H1 (cell line): ENCODE measurements at regions of chr1 and their contacts with region 1.

Region 1: DNA sequence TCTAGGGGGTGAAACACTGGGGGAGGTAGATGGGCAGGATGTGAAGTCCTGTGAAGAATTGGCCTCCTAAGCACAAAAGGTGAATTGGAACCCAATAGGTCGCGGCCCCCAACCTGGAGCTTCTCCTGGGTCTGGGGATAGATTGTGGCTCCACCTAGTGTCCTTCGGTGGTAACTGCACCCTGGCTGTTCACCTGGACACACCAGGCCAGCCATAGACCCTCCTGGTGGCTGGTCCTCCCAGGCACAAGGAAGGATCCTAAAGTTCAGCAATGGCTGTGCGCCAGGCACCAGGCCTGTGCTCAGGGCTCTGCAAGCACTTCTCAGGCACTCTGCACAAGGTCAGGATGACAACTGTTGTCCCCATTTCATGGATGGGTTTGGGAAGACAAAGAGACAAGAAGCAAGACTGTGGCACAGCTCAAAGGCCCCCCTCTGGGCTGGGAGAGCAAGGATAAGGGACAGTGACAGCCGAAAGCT is 13.5 kb downstream of the ESPN start:
- DNase-seq: peak; percentile 84 to 91
- H3K4me3 ChIP-seq: no peak overlapping the region
- H3K27ac ChIP-seq: no peak overlapping the region
- H3K4me1 ChIP-seq: peaks cover 3 to 11% (median 4%) of the 10 kb centered on the region in 4 experiments
- H3K27me3 ChIP-seq: peaks cover 0 to 20% (median 12%) of the 10 kb centered on the region in 4 experiments; a peak in 5 of 7 replicates
- CTCF ChIP-seq: peak; percentile 90 to 97 (median 96)
- EP300 ChIP-seq: no peak
- POLR2A ChIP-seq: no peak
- RAD21 ChIP-seq: peak; percentile 79 to 81

Region 2: GRCh38 chr1:6343506-6344405 is 94.3 kb before region 1 on chr1:
- CTCF ChIA-PET with region 1: interaction called, 25 read pairs
- POLR2A ChIA-PET with region 1: interaction called, 3 read pairs
- DNase-seq: peak; percentile 31 to 92
- H3K4me3 ChIP-seq: no peak overlapping the region
- H3K27ac ChIP-seq: no peak overlapping the region
- H3K4me1 ChIP-seq: peaks cover 3 to 7% (median 6%) of the 10 kb centered on the region in 4 experiments; a peak in 5 of 7 replicates
- H3K27me3 ChIP-seq: no peaks in the 10 kb centered on the region
- CTCF ChIP-seq: peak in 2 of 3 experiments; percentile 97 to 100; a peak in 3 of 4 replicates
- EP300 ChIP-seq: no peak
- POLR2A ChIP-seq: no peak
- RAD21 ChIP-seq: peak; percentile 99

Region 3: DNA sequence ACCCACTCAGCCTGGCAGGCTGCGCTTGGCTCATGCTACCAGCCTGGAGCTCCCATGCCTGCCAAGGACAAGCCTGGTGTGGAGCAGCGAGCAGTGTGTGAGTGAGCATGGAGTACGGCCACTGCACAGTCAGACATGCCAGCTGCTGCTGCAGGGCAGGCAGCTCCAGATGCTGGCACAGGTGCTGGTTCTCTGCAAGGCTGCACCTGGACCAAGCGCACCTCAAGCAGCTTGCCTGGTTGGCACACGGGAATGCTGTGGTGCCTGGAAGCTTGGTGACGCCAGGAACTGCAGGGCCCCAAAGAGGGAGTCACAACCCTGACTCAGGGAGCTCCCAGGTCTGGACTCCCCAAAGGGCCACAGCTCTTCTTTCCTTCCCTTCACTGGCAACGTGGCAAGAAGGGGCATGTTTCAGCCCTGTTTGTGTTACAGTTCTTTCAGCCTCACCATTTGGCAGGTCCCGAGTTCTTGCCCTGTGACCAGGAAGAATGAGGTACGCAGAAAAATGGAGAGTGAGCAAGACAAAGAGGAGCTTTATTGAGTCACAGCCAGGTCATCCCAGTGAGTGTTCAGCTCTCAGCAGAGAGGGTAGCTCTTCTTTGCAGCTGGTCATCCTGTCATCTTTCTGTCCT is 70.6 kb before region 1 on chr1:
- CTCF ChIA-PET with region 1: interaction called, 89 read pairs
- POLR2A ChIA-PET with region 1: interaction called, 3 read pairs
- DNase-seq: no peak
- H3K4me3 ChIP-seq: no peak overlapping the region
- H3K27ac ChIP-seq: no peak overlapping the region
- H3K4me1 ChIP-seq: peaks cover 0 to 2% (median 0%) of the 10 kb centered on the region in 4 experiments; a peak in 1 of 7 replicates
- H3K27me3 ChIP-seq: no peaks in the 10 kb centered on the region
- CTCF ChIP-seq: no peak
- EP300 ChIP-seq: no peak
- POLR2A ChIP-seq: no peak
- RAD21 ChIP-seq: no peak

Region 4: DNA sequence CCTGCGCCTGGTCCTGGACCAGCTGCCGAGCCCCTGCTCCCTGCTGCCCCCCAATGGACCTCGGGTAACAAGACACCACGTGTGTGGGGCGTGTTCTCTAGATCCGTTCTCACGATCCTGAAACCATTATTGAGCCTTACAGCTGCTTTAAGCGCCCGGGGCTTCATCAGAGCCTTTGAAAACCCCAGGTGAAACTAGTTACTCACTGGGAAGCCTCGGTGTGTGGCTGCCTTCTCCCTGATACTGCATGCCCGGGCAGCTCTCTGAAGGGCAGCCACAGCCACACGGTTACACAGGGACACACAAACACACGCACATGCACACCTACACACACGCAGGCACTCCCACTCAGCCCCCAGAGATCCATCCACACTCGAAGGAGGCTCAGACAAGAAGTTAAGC is 23.6 kb before region 1 on chr1:
- CTCF ChIA-PET with region 1: interaction called, 321 read pairs
- POLR2A ChIA-PET with region 1: interaction called, 3 read pairs
- DNase-seq: peak in 1 of 2 experiments; percentile 86
- H3K4me3 ChIP-seq: no peak overlapping the region; a peak in 1 of 8 replicates
- H3K27ac ChIP-seq: no peak overlapping the region
- H3K4me1 ChIP-seq: peaks cover 2 to 10% (median 5%) of the 10 kb centered on the region in 4 experiments; a peak in 6 of 7 replicates
- H3K27me3 ChIP-seq: peaks cover 29 to 52% (median 50%) of the 10 kb centered on the region in 4 experiments
- CTCF ChIP-seq: peak; percentile 79 to 91 (median 88)
- EP300 ChIP-seq: peak in 1 of 2 experiments; percentile 72; a peak in 1 of 3 replicates
- POLR2A ChIP-seq: no peak
- RAD21 ChIP-seq: peak; percentile 43 to 66

Region 5: GRCh38 chr1:6464514-6464836 is 26.4 kb after region 1 on chr1:
- CTCF ChIA-PET with region 1: interaction called, 14 read pairs
- POLR2A ChIA-PET with region 1: interaction called, 3 read pairs
- DNase-seq: no peak
- H3K4me3 ChIP-seq: no peak overlapping the region
- H3K27ac ChIP-seq: no peak overlapping the region
- H3K4me1 ChIP-seq: peaks cover 0 to 20% (median 13%) of the 10 kb centered on the region in 4 experiments; a peak in 5 of 7 replicates
- H3K27me3 ChIP-seq: peaks cover 0 to 7% (median 4%) of the 10 kb centered on the region in 4 experiments; a peak in 3 of 7 replicates
- CTCF ChIP-seq: peak in 1 of 3 experiments; percentile 14; a peak in 1 of 4 replicates
- EP300 ChIP-seq: no peak
- POLR2A ChIP-seq: no peak
- RAD21 ChIP-seq: peak in 1 of 2 experiments; percentile 18; a peak in 1 of 4 replicates